Mucosa of descending colon (tissue), 3 donors: ENCODE measurements at regions of chr9 and their contacts with region 1.

Region 1: GRCh38 chr9:8419596-8420275 is 620.2 kb upstream of the DMAC1 start:
- DNase-seq: no peak
- ATAC-seq: no peak
- H3K4me3 ChIP-seq: no peak overlapping the region
- H3K4me1 ChIP-seq: no peaks in the 10 kb centered on the region
- CTCF ChIP-seq: no peak

Region 2: DNA sequence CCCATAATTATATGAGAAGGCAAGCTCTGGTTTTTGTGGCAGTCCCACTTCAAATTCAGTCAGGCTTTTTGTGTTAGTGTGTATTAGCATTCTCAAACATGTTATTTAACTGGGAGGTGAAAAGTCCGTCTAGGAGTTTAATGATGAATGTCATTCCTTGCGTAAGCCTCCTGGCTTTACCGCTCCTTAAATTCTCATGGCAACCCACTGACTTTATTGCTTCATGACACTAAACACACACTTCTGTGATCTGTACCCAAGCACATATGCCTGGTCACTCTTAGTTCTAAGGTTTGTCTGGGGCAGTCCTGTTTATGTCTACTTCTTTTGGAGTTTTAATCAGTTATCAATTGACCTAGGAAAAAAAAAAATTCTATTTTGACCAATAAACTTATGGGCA is 57.7 kb after region 1 on chr9:
- intact Hi-C with region 1: loop called in 1 of 2 experiments (anchors 10 kb)
- DNase-seq: no peak
- ATAC-seq: no peak
- H3K4me3 ChIP-seq: no peak overlapping the region
- H3K4me1 ChIP-seq: no peaks in the 10 kb centered on the region
- CTCF ChIP-seq: no peak

Region 3: GRCh38 chr9:8706531-8706930 is 286.8 kb after region 1 on chr9:
- intact Hi-C with region 1: no loop called
- DNase-seq: no peak
- ATAC-seq: peak; percentile 13
- H3K4me3 ChIP-seq: no peak overlapping the region
- H3K4me1 ChIP-seq: no peaks in the 10 kb centered on the region
- CTCF ChIP-seq: no peak